Activated CD4-positive, alpha-beta memory T cell treated with anti-CD3 and anti-CD28 coated beads, Interleukin-2, amount 10 ng/mL, durations not matched to agents 7 days and 5 days (primary cell): ENCODE measurements at regions of chr4 and their contacts with region 1.

Region 1: DNA sequence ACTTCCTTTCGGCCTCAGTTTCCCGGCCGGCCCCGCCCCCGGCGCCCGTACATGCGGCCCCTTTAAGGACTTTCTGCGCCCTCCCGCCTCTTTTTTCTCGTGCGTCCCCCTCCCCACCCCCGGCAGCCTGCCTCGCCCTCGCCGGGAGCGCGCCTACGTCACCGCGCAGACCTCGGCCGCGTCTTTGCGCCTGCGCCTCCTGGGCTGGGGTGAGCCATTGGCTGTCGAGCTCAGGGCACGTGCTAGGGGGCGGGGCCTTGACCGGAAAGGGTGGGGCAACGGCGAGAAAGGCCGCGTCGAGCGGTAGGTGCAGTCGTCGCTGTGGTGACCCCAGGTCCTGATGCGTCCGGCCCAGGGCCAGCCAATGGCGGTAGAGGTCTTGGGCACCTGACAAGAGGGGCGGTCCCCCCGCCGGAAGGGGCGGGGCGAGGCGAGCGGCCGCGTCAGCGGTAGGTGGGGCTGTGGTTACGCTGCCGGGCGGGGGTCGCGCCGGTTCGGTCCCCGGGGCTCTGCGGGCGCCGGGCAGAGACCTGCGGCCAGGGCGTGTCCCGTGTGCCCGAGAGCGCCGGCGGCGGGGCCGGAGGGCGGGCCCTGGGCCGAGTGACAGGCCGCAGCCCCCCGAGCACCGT is at the start of gene UVSSA:
- DNase-seq: peak; percentile 100
- H3K4me3 Mint-ChIP-seq: peak within 1 kb of the TSS; percentile 94
- H3K27ac Mint-ChIP-seq: peak within 1 kb of the TSS; percentile 95
- H3K4me1 Mint-ChIP-seq: peaks cover 45% of the 10 kb centered on the region
- H3K27me3 Mint-ChIP-seq: no peaks in the 10 kb centered on the region
- total RNA-seq, gene UVSSA: 22.2 to 22.3 TPM

Region 2: GRCh38 chr4:1167247-1167949 is 179.5 kb before region 1 on chr4:
- CTCF ChIA-PET with region 1: interaction called, 4 read pairs
- POLR2A ChIA-PET with region 1: interaction called, 10 read pairs
- DNase-seq: peak; percentile 91
- H3K4me3 Mint-ChIP-seq: peak overlapping the region; percentile 78
- H3K27ac Mint-ChIP-seq: peak overlapping the region; percentile 63
- H3K4me1 Mint-ChIP-seq: peaks cover 33% of the 10 kb centered on the region
- H3K27me3 Mint-ChIP-seq: peaks cover 24% of the 10 kb centered on the region

Region 3: GRCh38 chr4:1249148-1249730 is 97.7 kb before region 1 on chr4:
- CTCF ChIA-PET with region 1: interaction called, 35 read pairs
- POLR2A ChIA-PET with region 1: interaction called, 120 read pairs
- DNase-seq: peak; percentile 85
- H3K4me3 Mint-ChIP-seq: peak overlapping the region; percentile 85
- H3K27ac Mint-ChIP-seq: peak overlapping the region; percentile 95
- H3K4me1 Mint-ChIP-seq: peaks cover 73% of the 10 kb centered on the region
- H3K27me3 Mint-ChIP-seq: no peaks in the 10 kb centered on the region

Region 4: GRCh38 chr4:1289207-1290164 is 57.4 kb before region 1 on chr4 and contains the start of gene MAEA:
- CTCF ChIA-PET with region 1: interaction called, 25 read pairs
- POLR2A ChIA-PET with region 1: interaction called, 80 read pairs
- DNase-seq: peak; percentile 98
- H3K4me3 Mint-ChIP-seq: peak within 1 kb of the TSS; percentile 94
- H3K27ac Mint-ChIP-seq: peak within 1 kb of the TSS; percentile 90
- H3K4me1 Mint-ChIP-seq: peaks cover 39% of the 10 kb centered on the region
- H3K27me3 Mint-ChIP-seq: no peaks in the 10 kb centered on the region
- total RNA-seq, gene MAEA: 61.6 to 64.1 TPM

Region 5: DNA sequence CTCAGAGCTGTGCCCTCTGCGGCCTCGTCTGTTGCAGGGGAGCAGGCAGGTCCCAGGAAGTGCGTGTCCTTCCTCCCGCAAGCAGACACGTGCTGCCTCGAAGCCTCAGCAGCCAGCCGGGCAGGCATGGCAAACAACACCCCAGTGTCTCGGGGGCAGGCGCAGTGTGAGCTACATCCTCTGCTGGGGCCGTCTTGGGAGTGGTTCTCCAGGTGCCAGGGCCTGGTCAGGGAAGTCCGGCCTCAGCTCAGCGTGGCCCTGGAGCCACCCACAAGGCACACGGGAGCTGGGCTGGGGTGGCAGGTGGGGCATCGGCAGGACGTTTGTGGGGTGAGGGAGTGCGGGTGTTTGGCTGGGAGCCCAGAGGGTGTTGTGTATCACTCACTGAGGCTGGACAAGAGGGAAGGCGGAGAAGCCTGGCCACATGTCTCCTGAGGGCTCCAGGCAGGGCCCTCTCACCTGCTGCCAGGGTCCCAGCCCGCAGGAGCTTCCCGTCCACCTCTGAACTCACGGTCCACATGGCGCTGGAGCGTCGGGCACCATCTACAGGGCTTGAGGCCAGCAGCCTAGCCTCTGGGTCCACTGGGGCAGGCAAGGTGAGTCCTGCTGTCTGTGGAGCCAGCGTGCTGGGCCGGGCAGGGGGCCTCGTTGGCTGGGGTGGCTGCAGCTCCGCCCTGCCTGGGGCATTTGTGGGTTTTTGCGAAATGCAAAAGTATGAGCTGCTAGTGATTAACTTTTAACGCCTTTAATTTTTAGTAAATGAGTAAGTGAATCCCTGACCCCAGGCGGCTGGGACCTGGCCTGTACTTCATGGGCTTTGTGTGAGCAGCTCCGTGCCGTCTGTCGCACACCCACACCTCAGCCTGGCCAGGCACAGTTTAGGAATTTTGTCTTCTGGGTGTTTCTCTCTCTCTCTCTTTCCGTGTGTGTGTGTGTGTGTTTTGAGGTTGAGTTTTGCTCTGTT is 17.2 kb before region 1 on chr4:
- CTCF ChIA-PET with region 1: interaction called, 18 read pairs
- POLR2A ChIA-PET with region 1: interaction called, 40 read pairs
- DNase-seq: no peak
- H3K4me3 Mint-ChIP-seq: peak overlapping the region; percentile 40
- H3K27ac Mint-ChIP-seq: peak overlapping the region; percentile 85
- H3K4me1 Mint-ChIP-seq: peaks cover 36% of the 10 kb centered on the region
- H3K27me3 Mint-ChIP-seq: no peaks in the 10 kb centered on the region

Region 6: GRCh38 chr4:1377226-1377605 is 30.3 kb after region 1 on chr4:
- CTCF ChIA-PET with region 1: no interaction called
- POLR2A ChIA-PET with region 1: no interaction called
- DNase-seq: no peak
- H3K4me3 Mint-ChIP-seq: no peak overlapping the region
- H3K27ac Mint-ChIP-seq: no peak overlapping the region
- H3K4me1 Mint-ChIP-seq: no peaks in the 10 kb centered on the region
- H3K27me3 Mint-ChIP-seq: no peaks in the 10 kb centered on the region

Region 7: DNA sequence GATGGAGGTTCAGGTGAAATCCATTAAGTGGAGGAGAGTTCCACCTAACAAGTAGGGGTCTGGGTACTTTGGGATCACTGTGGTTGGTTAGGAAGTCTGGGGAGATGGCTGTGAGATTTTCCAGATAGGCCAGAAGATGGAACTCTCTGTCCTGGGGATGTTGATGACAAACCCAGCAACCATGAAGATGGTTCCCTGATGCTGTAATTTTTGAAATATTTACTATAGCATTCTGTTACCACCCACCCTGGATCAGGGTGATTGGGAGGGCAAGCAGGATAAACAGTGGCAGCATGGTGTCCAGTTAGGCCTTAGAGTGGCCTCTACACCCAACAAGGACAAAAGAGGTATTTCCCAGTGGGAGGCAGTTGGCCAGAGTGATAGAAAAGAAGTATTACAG is 677.8 kb after region 1 on chr4:
- CTCF ChIA-PET with region 1: no interaction called
- POLR2A ChIA-PET with region 1: no interaction called
- DNase-seq: no peak
- H3K4me3 Mint-ChIP-seq: no peak overlapping the region
- H3K27ac Mint-ChIP-seq: no peak overlapping the region
- H3K4me1 Mint-ChIP-seq: no peaks in the 10 kb centered on the region
- H3K27me3 Mint-ChIP-seq: peaks cover 65% of the 10 kb centered on the region